AG04450 (cell line): ENCODE measurements at regions of chr10 and their contacts with region 1.

Region 1: GRCh38 chr10:19819419-19820033 is 3.3 kb downstream of the PLXDC2 start:
- DNase-seq: no peak
- H3K4me3 ChIP-seq: no peak overlapping the region
- H3K27ac ChIP-seq: no peak overlapping the region
- H3K27me3 ChIP-seq: peaks cover 11% of the 10 kb centered on the region
- CTCF ChIP-seq: peak; percentile 79

Region 2: DNA sequence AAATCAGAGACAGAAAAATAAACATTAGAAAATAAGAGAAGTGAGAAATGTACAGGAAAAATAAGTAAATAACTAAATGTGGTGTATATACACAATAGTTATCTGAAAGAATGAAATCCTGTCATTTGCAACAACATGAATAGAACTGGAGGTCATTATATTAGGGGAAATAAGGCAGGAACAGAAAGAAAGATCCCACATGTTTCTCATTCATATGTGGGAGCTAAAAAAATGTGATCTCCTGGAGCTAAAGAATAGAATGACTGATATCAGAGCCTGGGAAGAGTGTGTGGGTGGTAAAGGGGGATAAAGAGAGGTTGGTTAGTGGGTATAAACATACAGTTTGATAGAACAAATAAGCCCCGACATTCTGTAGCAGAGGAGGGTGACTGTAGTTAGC is 24.0 kb after region 1 on chr10:
- CTCF ChIA-PET with region 1: interaction called, 11 read pairs
- POLR2A ChIA-PET with region 1: interaction called, 3 read pairs
- DNase-seq: peak; percentile 23
- H3K4me3 ChIP-seq: no peak overlapping the region
- H3K27ac ChIP-seq: no peak overlapping the region
- H3K27me3 ChIP-seq: no peaks in the 10 kb centered on the region
- CTCF ChIP-seq: no peak